WTC11 (cell line): ENCODE measurements at regions of chrX and their contacts with region 1.

Region 1: GRCh38 chrX:131068945-131069719 is 11.0 kb downstream of the ARHGAP36 start:
- DNase-seq: peak; percentile 83
- ATAC-seq: peak; percentile 60
- H3K4me3 Mint-ChIP-seq: no peak overlapping the region
- H3K27ac Mint-ChIP-seq: no peak overlapping the region
- H3K4me1 Mint-ChIP-seq: peaks cover 30% of the 10 kb centered on the region
- H3K27me3 Mint-ChIP-seq: peaks cover 3% of the 10 kb centered on the region
- CTCF ChIP-seq: peak; percentile 23; the same call in 1 of the 2 replicates

Region 2: DNA sequence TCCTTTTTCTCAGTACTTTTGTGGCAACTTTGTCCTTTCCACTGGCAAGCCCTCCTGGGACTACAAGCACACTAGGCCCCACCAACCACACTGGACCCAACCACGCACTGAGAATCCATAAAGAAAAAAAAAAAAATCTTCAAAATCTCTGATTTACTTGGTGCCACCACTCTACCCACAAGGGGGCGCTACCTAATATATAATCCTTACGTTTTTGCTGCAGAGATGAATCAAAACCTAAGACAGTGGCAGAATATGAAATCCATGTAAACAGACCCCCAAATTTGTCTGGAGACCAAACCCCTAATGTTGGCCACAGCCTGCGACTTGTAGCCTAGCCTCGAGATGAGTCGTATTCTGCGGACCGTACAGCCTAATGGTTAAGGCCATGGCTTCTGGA is 74.5 kb before region 1 on chrX:
- CTCF ChIA-PET with region 1: interaction called, 17 read pairs
- POLR2A ChIA-PET with region 1: no interaction called
- DNase-seq: peak; percentile 24
- ATAC-seq: no peak
- H3K4me3 Mint-ChIP-seq: no peak overlapping the region
- H3K27ac Mint-ChIP-seq: no peak overlapping the region
- H3K4me1 Mint-ChIP-seq: no peaks in the 10 kb centered on the region
- H3K27me3 Mint-ChIP-seq: no peaks in the 10 kb centered on the region
- CTCF ChIP-seq: peak; percentile 47

Region 3: DNA sequence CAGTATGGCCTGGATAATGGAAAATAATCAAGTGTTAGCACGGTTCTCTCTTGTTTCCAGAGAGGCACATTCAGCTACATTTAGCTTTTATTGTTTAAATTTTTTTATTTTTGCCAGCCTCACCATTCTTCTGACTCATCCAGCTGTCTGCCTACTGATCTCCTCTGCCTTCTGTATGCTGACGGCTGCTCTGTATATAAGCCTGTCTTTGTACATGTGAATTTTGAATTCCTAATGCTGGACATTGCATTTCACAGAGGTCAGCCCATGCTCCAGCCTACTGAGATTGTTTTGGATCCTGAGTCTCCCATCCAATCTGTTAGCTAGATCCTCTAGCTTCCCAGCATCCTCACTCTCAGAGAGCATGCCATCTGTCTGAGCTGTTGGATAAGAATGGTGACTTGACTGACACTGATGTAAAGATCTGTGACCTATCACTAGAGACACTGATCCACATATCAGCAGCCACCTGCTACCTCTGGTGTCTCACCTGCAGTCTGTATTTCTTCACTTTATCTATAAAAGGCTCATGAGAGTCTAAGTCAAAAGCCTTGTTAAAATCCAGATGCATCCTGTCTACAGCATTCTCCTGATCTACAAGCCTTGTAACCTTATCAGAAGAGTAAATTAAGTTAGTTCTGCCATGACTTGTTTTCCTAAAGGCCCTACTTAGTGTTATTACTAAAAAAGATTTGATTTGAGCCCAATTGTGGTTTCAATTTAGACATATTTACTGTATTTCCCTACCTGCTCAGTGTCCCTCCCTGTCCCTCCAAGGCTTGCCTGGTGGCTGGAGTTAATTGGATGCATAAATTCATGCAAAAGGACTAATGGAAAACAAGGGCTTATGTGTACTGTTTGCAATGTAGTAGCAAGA is 36.5 kb before region 1 on chrX:
- CTCF ChIA-PET with region 1: no interaction called
- POLR2A ChIA-PET with region 1: no interaction called
- DNase-seq: no peak
- ATAC-seq: no peak
- H3K4me3 Mint-ChIP-seq: no peak overlapping the region
- H3K27ac Mint-ChIP-seq: no peak overlapping the region
- H3K4me1 Mint-ChIP-seq: no peaks in the 10 kb centered on the region
- H3K27me3 Mint-ChIP-seq: peaks cover 8% of the 10 kb centered on the region
- CTCF ChIP-seq: no peak

Region 4: GRCh38 chrX:131058136-131058868 is 10.8 kb before region 1 on chrX and contains the start of gene ARHGAP36:
- CTCF ChIA-PET with region 1: interaction called, 19 read pairs
- POLR2A ChIA-PET with region 1: no interaction called
- DNase-seq: peak; percentile 26
- ATAC-seq: peak; percentile 55
- H3K4me3 Mint-ChIP-seq: peak within 1 kb of the TSS; percentile 70
- H3K27ac Mint-ChIP-seq: no peak within 1 kb of the TSS
- H3K4me1 Mint-ChIP-seq: peaks cover 25% of the 10 kb centered on the region
- H3K27me3 Mint-ChIP-seq: peaks cover 58% of the 10 kb centered on the region
- CTCF ChIP-seq: no peak
- total RNA-seq, gene ARHGAP36: 0.09 to 0.52 TPM (median 0.21 TPM) in 3 replicates

Region 5: DNA sequence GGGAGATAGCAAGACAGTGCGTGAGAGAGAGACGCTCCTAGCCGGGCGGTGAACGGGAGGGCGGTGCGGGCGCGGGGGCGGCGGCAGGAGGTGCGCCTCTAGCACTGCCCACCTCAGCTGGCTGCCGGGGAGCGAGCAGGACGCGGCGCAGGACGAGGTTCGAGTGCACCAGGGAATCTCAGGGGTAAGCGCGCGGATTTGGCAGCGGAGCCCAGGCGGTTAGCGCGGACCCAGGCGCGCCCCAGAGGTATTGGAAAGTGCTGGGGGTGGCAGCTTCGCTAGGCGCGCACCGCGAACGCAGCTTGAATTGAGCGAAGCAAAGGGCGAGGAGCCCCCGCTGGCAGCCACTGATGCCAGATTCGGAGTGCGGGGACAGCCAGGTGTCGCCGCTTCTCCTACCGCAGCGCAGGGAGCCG is 13.2 kb after region 1 on chrX:
- CTCF ChIA-PET with region 1: interaction called, 25 read pairs
- POLR2A ChIA-PET with region 1: interaction called, 3 read pairs
- DNase-seq: peak; percentile 39
- ATAC-seq: peak; percentile 66
- H3K4me3 Mint-ChIP-seq: peak overlapping the region; percentile 77
- H3K27ac Mint-ChIP-seq: no peak overlapping the region
- H3K4me1 Mint-ChIP-seq: peaks cover 32% of the 10 kb centered on the region
- H3K27me3 Mint-ChIP-seq: peaks cover 96% of the 10 kb centered on the region
- CTCF ChIP-seq: no peak